Endothelial cell of umbilical vein (primary cell): ENCODE measurements at regions of chr9 and their contacts with region 1.

Region 1: GRCh38 chr9:7289773-7290172 is 509.8 kb downstream of the DMAC1 start:
- DNase-seq: no peak
- H3K4me3 ChIP-seq: no peak overlapping the region
- H3K27ac ChIP-seq: no peak overlapping the region
- H3K4me1 ChIP-seq: no peaks in the 10 kb centered on the region
- H3K27me3 ChIP-seq: no peaks in the 10 kb centered on the region
- CTCF ChIP-seq: no peak
- POLR2A ChIP-seq: no peak

Region 2: DNA sequence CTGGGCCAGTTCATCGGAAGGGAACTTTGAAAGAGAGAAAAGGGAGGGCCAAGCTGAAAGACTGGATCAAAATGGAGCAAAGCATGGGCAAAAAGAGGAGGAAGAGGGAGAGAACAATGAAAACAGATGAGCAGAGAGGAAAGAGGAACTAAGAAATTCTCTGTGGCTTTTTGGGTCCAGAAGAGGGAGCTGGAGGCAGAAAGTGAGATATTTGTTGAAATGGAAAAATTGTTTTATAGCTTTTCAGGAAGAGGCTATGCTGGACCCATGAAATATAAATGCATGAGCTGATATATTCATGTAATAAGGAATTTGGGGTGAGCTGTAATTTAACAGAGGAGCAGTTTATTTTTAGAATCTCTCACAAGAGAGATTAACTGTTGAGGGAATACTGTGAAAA is 52.5 kb after region 1 on chr9:
- CTCF ChIA-PET with region 1: no interaction called
- POLR2A ChIA-PET with region 1: no interaction called
- dilution Hi-C with region 1: no loop called
- intact Hi-C with region 1: loop called (anchors 10 kb)
- DNase-seq: no peak
- H3K4me3 ChIP-seq: no peak overlapping the region
- H3K27ac ChIP-seq: no peak overlapping the region
- H3K4me1 ChIP-seq: no peaks in the 10 kb centered on the region
- H3K27me3 ChIP-seq: no peaks in the 10 kb centered on the region
- CTCF ChIP-seq: no peak
- POLR2A ChIP-seq: no peak